Activated CD8-positive, alpha-beta memory T cell treated with anti-CD3 and anti-CD28 coated beads, Interleukin-2, amount 10 ng/mL, durations not matched to agents 7 days and 5 days (primary cell): ENCODE measurements at regions of chr5 and their contacts with region 1.

Region 1: GRCh38 chr5:139633295-139634027 is 14.7 kb upstream of the CXXC5 start:
- DNase-seq: peak; percentile 78
- ATAC-seq: peak; percentile 40
- H3K4me3 Mint-ChIP-seq: no peak overlapping the region
- H3K27ac Mint-ChIP-seq: peak overlapping the region; percentile 29
- H3K4me1 Mint-ChIP-seq: peaks cover 52% of the 10 kb centered on the region
- H3K27me3 Mint-ChIP-seq: no peaks in the 10 kb centered on the region

Region 2: GRCh38 chr5:138772986-138773594 is 860.4 kb before region 1 on chr5:
- CTCF ChIA-PET with region 1: no interaction called
- DNase-seq: no peak
- ATAC-seq: no peak
- H3K4me3 Mint-ChIP-seq: no peak overlapping the region
- H3K27ac Mint-ChIP-seq: no peak overlapping the region
- H3K4me1 Mint-ChIP-seq: no peaks in the 10 kb centered on the region
- H3K27me3 Mint-ChIP-seq: no peaks in the 10 kb centered on the region

Region 3: GRCh38 chr5:139075066-139076050 is 558.1 kb before region 1 on chr5:
- CTCF ChIA-PET with region 1: no interaction called
- DNase-seq: no peak
- ATAC-seq: no peak
- H3K4me3 Mint-ChIP-seq: no peak overlapping the region
- H3K27ac Mint-ChIP-seq: no peak overlapping the region
- H3K4me1 Mint-ChIP-seq: no peaks in the 10 kb centered on the region
- H3K27me3 Mint-ChIP-seq: no peaks in the 10 kb centered on the region

Region 4: DNA sequence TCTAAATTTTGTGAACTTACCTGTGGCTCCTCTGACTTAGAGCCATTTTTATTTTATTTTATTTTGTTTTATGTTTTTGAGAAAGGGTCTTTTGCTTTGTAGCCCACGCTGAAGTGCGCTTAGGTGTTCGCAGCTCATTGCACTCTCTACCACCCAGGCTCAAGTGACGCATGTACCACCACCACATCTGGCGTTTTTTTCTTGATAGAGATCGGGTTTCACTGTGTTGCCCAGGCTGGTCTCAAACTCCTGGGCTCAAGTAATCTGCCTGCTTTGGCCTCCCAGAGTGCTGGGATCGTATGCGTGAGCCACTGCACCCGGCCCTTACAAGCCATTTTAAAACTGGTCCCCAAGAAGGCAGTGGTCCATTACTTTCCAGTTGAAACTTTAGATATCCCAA is 321.4 kb before region 1 on chr5:
- CTCF ChIA-PET with region 1: no interaction called
- DNase-seq: no peak
- ATAC-seq: no peak
- H3K4me3 Mint-ChIP-seq: no peak overlapping the region
- H3K27ac Mint-ChIP-seq: no peak overlapping the region
- H3K4me1 Mint-ChIP-seq: peaks cover 51% of the 10 kb centered on the region
- H3K27me3 Mint-ChIP-seq: no peaks in the 10 kb centered on the region

Region 5: DNA sequence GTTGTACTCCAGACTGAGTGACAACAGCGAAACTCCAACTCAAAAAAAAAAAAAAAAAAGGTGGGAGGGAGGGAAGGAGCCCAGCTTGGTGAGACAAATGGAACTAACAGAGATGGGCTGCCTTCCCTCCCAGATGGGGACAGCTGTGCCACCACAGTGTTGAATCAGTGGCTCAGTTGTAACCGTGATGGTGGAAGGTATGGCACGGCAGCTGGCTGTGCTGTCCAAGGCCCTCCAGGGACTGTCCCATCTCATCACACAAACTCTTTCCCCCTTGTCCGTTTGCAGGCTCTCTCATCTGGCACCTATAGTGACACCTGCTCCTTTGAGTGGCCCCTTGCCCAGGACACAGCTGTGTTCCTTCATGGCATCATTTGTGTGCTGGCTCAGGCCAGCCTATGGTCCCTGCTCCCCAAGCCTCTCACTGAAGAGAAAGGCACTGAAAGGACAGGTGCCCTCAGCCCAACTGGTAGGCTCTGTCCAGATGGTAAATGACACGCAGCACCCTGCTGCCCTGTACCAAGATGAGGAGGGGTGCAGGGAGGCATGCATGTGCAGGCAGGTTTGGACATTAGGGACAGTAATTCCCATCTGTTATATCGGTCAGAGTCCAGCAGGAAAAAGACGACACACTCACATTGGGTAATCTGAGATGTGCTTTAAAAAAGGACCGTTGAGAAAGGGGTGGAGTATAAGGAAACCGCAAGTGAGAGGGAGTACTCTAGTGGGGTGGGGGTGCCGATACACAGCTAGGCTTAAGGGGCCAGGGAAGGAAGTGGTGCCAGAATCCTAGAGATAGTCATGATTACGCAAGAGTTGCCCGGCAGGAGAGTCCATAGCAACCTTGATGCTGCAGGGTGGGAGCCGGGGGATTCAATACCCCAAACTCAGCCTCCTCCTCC is 158.3 kb before region 1 on chr5:
- CTCF ChIA-PET with region 1: no interaction called
- DNase-seq: no peak
- ATAC-seq: peak; percentile 48
- H3K4me3 Mint-ChIP-seq: no peak overlapping the region
- H3K27ac Mint-ChIP-seq: peak overlapping the region; percentile 84
- H3K4me1 Mint-ChIP-seq: peaks cover 63% of the 10 kb centered on the region
- H3K27me3 Mint-ChIP-seq: no peaks in the 10 kb centered on the region

Region 6: DNA sequence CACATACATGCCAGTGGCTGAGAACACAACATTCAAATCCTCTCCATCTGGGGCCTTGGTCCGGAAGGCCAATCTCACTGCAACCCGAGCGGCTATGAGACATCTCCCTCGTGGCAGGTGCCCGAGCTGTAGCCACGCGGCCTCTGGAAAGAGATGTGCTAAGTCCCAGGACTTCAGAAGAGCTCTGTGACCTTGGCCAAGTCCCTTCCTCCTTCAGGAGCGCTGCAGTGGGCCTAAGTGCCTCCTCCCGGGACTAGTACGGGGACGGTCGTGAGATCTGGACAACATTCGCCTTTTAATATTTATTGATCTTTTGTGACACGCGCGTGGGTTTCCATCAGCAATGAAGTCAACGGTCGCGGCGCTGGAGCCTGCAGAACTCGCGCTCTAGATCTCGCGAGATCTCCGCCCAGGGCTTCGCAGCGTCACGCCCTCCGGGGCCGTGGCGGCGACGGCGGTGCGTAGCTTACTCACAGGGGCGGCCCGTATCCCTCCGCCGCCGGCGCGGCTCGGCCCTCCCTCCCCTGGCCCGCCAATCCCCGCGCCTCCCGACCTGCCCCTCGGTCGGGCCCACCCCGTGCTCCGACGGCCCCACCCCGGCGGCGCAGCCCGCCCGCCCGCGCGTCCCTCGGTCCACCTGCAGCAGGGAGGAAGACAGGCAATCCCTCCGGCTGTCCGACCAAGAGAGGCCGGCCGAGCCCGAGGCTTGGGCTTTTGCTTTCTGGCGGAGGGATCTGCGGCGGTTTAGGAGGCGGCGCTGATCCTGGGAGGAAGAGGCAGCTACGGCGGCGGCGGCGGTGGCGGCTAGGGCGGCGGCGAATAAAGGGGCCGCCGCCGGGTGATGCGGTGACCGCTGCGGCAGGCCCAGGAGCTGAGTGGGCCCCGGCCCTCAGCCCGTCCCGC is 72.5 kb before region 1 on chr5 and contains the start of gene UBE2D2:
- CTCF ChIA-PET with region 1: interaction called, 11 read pairs
- DNase-seq: peak; percentile 98
- ATAC-seq: peak; percentile 93
- H3K4me3 Mint-ChIP-seq: peak within 1 kb of the TSS; percentile 96
- H3K27ac Mint-ChIP-seq: peak within 1 kb of the TSS; percentile 94
- H3K4me1 Mint-ChIP-seq: peaks cover 36% of the 10 kb centered on the region
- H3K27me3 Mint-ChIP-seq: no peaks in the 10 kb centered on the region
- total RNA-seq, gene UBE2D2: 201 to 244 TPM

Region 7: GRCh38 chr5:139619861-139620260 is 13.6 kb before region 1 on chr5:
- CTCF ChIA-PET with region 1: interaction called, 10 read pairs
- DNase-seq: no peak
- ATAC-seq: no peak
- H3K4me3 Mint-ChIP-seq: no peak overlapping the region
- H3K27ac Mint-ChIP-seq: no peak overlapping the region
- H3K4me1 Mint-ChIP-seq: peaks cover 6% of the 10 kb centered on the region
- H3K27me3 Mint-ChIP-seq: no peaks in the 10 kb centered on the region

Region 8: GRCh38 chr5:139670369-139671095 is 37.1 kb after region 1 on chr5:
- CTCF ChIA-PET with region 1: interaction called, 84 read pairs
- DNase-seq: peak; percentile 66
- ATAC-seq: peak; percentile 35
- H3K4me3 Mint-ChIP-seq: peak overlapping the region; percentile 81
- H3K27ac Mint-ChIP-seq: peak overlapping the region; percentile 80
- H3K4me1 Mint-ChIP-seq: peaks cover 45% of the 10 kb centered on the region
- H3K27me3 Mint-ChIP-seq: no peaks in the 10 kb centered on the region

Region 9: DNA sequence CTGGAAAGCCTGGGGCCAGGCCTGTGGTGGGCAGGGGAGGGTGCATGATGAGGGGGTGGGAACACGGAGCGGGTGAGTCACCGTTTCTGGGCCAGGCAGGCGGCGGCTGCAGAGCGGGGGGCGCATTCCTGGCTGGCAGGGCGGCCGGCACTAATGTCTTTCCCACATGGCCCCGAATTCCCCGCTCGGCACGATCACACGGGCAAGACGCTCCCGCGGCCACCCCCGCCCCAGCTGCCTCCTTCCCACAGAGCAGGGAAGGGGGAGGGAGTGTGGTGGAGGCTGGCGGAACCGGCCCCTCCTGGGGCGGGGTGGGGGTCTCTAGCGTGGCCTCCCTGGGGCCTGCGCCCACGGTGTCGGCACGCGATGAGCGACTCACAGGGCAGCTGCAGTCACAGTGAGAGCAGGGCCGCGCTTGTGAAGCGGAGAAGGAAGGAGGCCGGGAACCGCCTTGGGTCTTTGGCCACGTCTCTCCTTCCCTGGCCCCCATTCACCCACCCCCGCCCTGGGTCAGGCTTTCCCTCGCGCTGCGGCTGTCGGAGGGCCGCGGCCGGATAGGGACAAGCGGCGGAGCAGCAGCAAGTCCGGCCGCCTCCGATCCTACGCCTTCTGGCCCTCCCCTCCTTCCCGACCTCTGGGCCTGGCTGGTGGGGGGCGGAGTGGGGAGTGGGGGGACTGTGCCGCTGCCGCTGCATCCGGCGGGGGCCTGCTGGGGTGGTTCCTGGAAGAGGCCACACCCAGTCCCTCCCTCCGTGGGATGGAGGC is 63.6 kb after region 1 on chr5:
- CTCF ChIA-PET with region 1: interaction called, 215 read pairs
- DNase-seq: no peak
- ATAC-seq: peak; percentile 71
- H3K4me3 Mint-ChIP-seq: peak overlapping the region; percentile 32
- H3K27ac Mint-ChIP-seq: no peak overlapping the region
- H3K4me1 Mint-ChIP-seq: peaks cover 31% of the 10 kb centered on the region
- H3K27me3 Mint-ChIP-seq: peaks cover 28% of the 10 kb centered on the region

Region 10: GRCh38 chr5:139745800-139746690 is 112.6 kb after region 1 on chr5:
- CTCF ChIA-PET with region 1: interaction called, 18 read pairs
- DNase-seq: no peak
- ATAC-seq: peak; percentile 43
- H3K4me3 Mint-ChIP-seq: peak overlapping the region; percentile 64
- H3K27ac Mint-ChIP-seq: no peak overlapping the region
- H3K4me1 Mint-ChIP-seq: peaks cover 17% of the 10 kb centered on the region
- H3K27me3 Mint-ChIP-seq: peaks cover 36% of the 10 kb centered on the region